Caco-2 (cell line): ENCODE measurements at regions of chr7 and their contacts with region 1.

Region 1: GRCh38 chr7:3200504-3200903 is 100.5 kb upstream of the SDK1 start:
- DNase-seq: peak; percentile 58 to 63
- H3K4me3 ChIP-seq: no peak overlapping the region
- H3K4me3 Mint-ChIP-seq: no peak overlapping the region
- H3K27ac Mint-ChIP-seq: no peak overlapping the region
- H3K4me1 ChIP-seq: 0 out of 2 replicates have a peak, but pooled peaks cover 12% of the 10 kb centered on the region
- H3K4me1 Mint-ChIP-seq: peaks cover 7% of the 10 kb centered on the region
- H3K27me3 ChIP-seq: no peaks in the 10 kb centered on the region
- H3K27me3 Mint-ChIP-seq: no peaks in the 10 kb centered on the region
- CTCF ChIP-seq: peak; percentile 54

Region 2: GRCh38 chr7:2886900-2887299 is 313.6 kb before region 1 on chr7:
- CTCF ChIA-PET with region 1: no interaction called
- POLR2A ChIA-PET with region 1: no interaction called
- intact Hi-C with region 1: loop called (anchors 2 kb)
- DNase-seq: peak; percentile 76 to 77
- H3K4me3 ChIP-seq: no peak overlapping the region
- H3K4me3 Mint-ChIP-seq: no peak overlapping the region
- H3K27ac Mint-ChIP-seq: peak overlapping the region; percentile 52
- H3K4me1 ChIP-seq: no peaks in the 10 kb centered on the region
- H3K4me1 Mint-ChIP-seq: peaks cover 7% of the 10 kb centered on the region
- H3K27me3 ChIP-seq: no peaks in the 10 kb centered on the region
- H3K27me3 Mint-ChIP-seq: peaks cover 3% of the 10 kb centered on the region
- CTCF ChIP-seq: peak; percentile 70 to 92

Region 3: GRCh38 chr7:3065724-3066143 is 134.8 kb before region 1 on chr7:
- CTCF ChIA-PET with region 1: no interaction called
- POLR2A ChIA-PET with region 1: no interaction called
- intact Hi-C with region 1: loop called (anchors 1 kb)
- DNase-seq: peak; percentile 49 to 55
- H3K4me3 ChIP-seq: no peak overlapping the region
- H3K4me3 Mint-ChIP-seq: no peak overlapping the region
- H3K27ac Mint-ChIP-seq: no peak overlapping the region
- H3K4me1 ChIP-seq: no peaks in the 10 kb centered on the region
- H3K4me1 Mint-ChIP-seq: no peaks in the 10 kb centered on the region
- H3K27me3 ChIP-seq: no peaks in the 10 kb centered on the region
- H3K27me3 Mint-ChIP-seq: peaks cover 4% of the 10 kb centered on the region
- CTCF ChIP-seq: peak; percentile 53 to 59

Region 4: DNA sequence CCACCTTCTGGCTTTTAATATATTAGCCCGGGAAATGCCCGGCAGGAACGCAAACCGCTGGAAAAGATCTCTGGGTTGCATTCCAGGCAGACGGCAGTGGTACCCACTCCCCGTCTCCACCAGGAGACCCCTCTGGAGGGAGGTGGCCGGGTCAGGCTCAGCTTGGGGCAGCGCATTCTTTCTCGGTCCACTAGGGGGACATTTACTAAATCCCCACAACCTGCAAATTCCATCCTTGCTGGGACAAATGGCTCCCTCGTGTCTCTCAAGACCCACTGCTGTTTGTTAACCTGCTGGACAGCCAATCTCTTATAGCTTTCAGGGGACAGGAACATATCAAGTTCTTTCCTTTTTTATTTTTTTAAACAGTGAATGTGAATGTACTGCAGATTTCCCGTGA is 111.0 kb before region 1 on chr7:
- CTCF ChIA-PET with region 1: interaction called, 3 read pairs
- POLR2A ChIA-PET with region 1: no interaction called
- intact Hi-C with region 1: loop called (anchors 5 kb)
- DNase-seq: peak; percentile 40 to 49
- H3K4me3 ChIP-seq: no peak overlapping the region
- H3K4me3 Mint-ChIP-seq: no peak overlapping the region
- H3K27ac Mint-ChIP-seq: no peak overlapping the region
- H3K4me1 ChIP-seq: no peaks in the 10 kb centered on the region
- H3K4me1 Mint-ChIP-seq: no peaks in the 10 kb centered on the region
- H3K27me3 ChIP-seq: no peaks in the 10 kb centered on the region; the same call in 1 of the 2 replicates
- H3K27me3 Mint-ChIP-seq: peaks cover 4% of the 10 kb centered on the region
- CTCF ChIP-seq: peak; percentile 59 to 73

Region 5: GRCh38 chr7:3151784-3152183 is 48.7 kb before region 1 on chr7:
- CTCF ChIA-PET with region 1: no interaction called
- POLR2A ChIA-PET with region 1: no interaction called
- intact Hi-C with region 1: no loop called
- DNase-seq: no peak
- H3K4me3 ChIP-seq: no peak overlapping the region
- H3K4me3 Mint-ChIP-seq: no peak overlapping the region
- H3K27ac Mint-ChIP-seq: no peak overlapping the region
- H3K4me1 ChIP-seq: no peaks in the 10 kb centered on the region
- H3K4me1 Mint-ChIP-seq: peaks cover 2% of the 10 kb centered on the region
- H3K27me3 ChIP-seq: no peaks in the 10 kb centered on the region
- H3K27me3 Mint-ChIP-seq: peaks cover 8% of the 10 kb centered on the region
- CTCF ChIP-seq: no peak

Region 6: GRCh38 chr7:3164380-3164792 is 36.1 kb before region 1 on chr7:
- CTCF ChIA-PET with region 1: no interaction called
- POLR2A ChIA-PET with region 1: no interaction called
- intact Hi-C with region 1: loop called (anchors 2 kb)
- DNase-seq: peak; percentile 80 to 88
- H3K4me3 ChIP-seq: no peak overlapping the region
- H3K4me3 Mint-ChIP-seq: peak overlapping the region; percentile 51
- H3K27ac Mint-ChIP-seq: peak overlapping the region; percentile 86
- H3K4me1 ChIP-seq: peaks cover 25% of the 10 kb centered on the region
- H3K4me1 Mint-ChIP-seq: peaks cover 10% of the 10 kb centered on the region
- H3K27me3 ChIP-seq: no peaks in the 10 kb centered on the region
- H3K27me3 Mint-ChIP-seq: no peaks in the 10 kb centered on the region
- CTCF ChIP-seq: no peak